ENCODE measurements at regions of chr2 and their contacts with region 1.

Region 1: GRCh38 chr2:213251618-213252017 is 32.6 kb upstream of the SPAG16 start:
- DNase-seq: peak in 1 of 2 experiments; percentile 58
- H3K4me3 ChIP-seq: no peak overlapping the region
- H3K4me3 Mint-ChIP-seq: no peak overlapping the region
- H3K27ac Mint-ChIP-seq: peak overlapping the region; percentile 76
- H3K4me1 ChIP-seq: peaks cover 6% of the 10 kb centered on the region; the same call in 1 of the 2 replicates
- H3K4me1 Mint-ChIP-seq: peaks cover 6% of the 10 kb centered on the region
- H3K27me3 ChIP-seq: no peaks in the 10 kb centered on the region
- H3K27me3 Mint-ChIP-seq: no peaks in the 10 kb centered on the region
- CTCF ChIP-seq: peak; percentile 57 to 61

Region 2: DNA sequence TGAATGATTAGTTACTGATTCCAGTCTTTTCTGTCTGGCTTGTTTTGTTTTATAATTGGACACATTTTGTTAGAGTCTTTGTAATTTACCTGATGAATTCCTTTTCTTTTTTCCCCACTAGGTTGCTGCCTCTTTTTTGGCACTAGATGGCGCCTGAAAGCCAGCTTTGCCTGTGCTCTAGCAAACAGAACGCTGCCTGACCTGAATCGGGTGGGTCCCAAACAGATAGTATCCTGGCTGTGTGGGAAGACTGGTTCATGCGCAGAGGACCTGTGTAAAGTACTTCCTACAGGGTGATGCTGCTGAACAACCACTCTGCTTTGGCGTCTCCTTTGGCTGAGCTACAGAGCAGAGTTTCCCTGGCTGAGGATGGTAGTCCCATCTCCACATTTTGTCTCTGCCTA is 388.4 kb before region 1 on chr2:
- CTCF ChIA-PET with region 1: no interaction called
- POLR2A ChIA-PET with region 1: no interaction called
- intact Hi-C with region 1: loop called (anchors 1 kb)
- DNase-seq: peak; percentile 64 to 70
- H3K4me3 ChIP-seq: no peak overlapping the region
- H3K4me3 Mint-ChIP-seq: no peak overlapping the region
- H3K27ac Mint-ChIP-seq: no peak overlapping the region
- H3K4me1 ChIP-seq: no peaks in the 10 kb centered on the region
- H3K4me1 Mint-ChIP-seq: no peaks in the 10 kb centered on the region
- H3K27me3 ChIP-seq: no peaks in the 10 kb centered on the region
- H3K27me3 Mint-ChIP-seq: no peaks in the 10 kb centered on the region
- CTCF ChIP-seq: peak; percentile 57 to 59

Region 3: GRCh38 chr2:213151437-213152064 is 100.1 kb before region 1 on chr2 and contains the start of gene IKZF2:
- CTCF ChIA-PET with region 1: no interaction called
- POLR2A ChIA-PET with region 1: no interaction called
- intact Hi-C with region 1: no loop called
- DNase-seq: peak; percentile 86 to 88
- H3K4me3 ChIP-seq: peak within 1 kb of the TSS; percentile 70
- H3K4me3 Mint-ChIP-seq: peak within 1 kb of the TSS; percentile 97
- H3K27ac Mint-ChIP-seq: peak within 1 kb of the TSS; percentile 61
- H3K4me1 ChIP-seq: 0 out of 2 replicates have a peak, but pooled peaks cover 3% of the 10 kb centered on the region
- H3K4me1 Mint-ChIP-seq: peaks cover 19% of the 10 kb centered on the region
- H3K27me3 ChIP-seq: no peaks in the 10 kb centered on the region
- H3K27me3 Mint-ChIP-seq: no peaks in the 10 kb centered on the region
- CTCF ChIP-seq: no peak
- total RNA-seq, gene IKZF2: 13.3 and 14.2 TPM in 2 replicates

Region 4: DNA sequence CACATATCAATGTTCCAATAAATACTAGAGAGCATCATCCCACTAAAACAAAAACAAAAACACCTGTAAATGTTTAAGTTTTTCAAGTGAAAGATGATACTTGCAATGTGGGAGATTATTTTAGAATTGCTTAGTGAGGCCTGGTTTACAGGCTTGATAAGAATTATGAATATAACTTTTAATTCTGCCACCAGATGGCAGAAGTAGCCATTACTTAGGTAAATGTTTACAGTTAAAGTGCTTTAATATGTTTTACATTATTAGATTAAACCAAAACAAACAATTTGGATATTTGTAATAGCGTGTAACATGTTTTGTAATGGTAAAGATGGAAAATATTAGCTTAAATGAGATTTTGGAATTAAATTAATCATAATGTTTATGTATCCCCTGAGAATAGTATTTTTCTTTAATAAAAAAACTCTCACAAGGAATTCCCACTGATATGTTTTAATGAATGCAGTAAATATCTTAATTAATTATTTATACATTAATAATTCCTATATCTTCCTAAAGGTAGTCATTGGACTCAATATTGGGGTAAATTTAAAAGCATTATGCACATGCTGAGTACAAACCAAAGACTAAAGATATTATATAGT is 554.6 kb after region 1 on chr2:
- CTCF ChIA-PET with region 1: no interaction called
- POLR2A ChIA-PET with region 1: no interaction called
- intact Hi-C with region 1: loop called (anchors 5 kb)
- DNase-seq: no peak
- H3K4me3 ChIP-seq: no peak overlapping the region
- H3K4me3 Mint-ChIP-seq: no peak overlapping the region
- H3K27ac Mint-ChIP-seq: no peak overlapping the region
- H3K4me1 ChIP-seq: no peaks in the 10 kb centered on the region
- H3K4me1 Mint-ChIP-seq: no peaks in the 10 kb centered on the region
- H3K27me3 ChIP-seq: no peaks in the 10 kb centered on the region
- H3K27me3 Mint-ChIP-seq: no peaks in the 10 kb centered on the region
- CTCF ChIP-seq: peak; percentile 13 to 36

Region 5: GRCh38 chr2:213934560-213934959 is 682.9 kb after region 1 on chr2:
- CTCF ChIA-PET with region 1: no interaction called
- POLR2A ChIA-PET with region 1: no interaction called
- intact Hi-C with region 1: loop called (anchors 1 kb)
- DNase-seq: peak in 1 of 2 experiments; percentile 14
- H3K4me3 ChIP-seq: no peak overlapping the region
- H3K4me3 Mint-ChIP-seq: no peak overlapping the region
- H3K27ac Mint-ChIP-seq: no peak overlapping the region
- H3K4me1 ChIP-seq: no peaks in the 10 kb centered on the region
- H3K4me1 Mint-ChIP-seq: peaks cover under 1% of the 10 kb centered on the region
- H3K27me3 ChIP-seq: no peaks in the 10 kb centered on the region
- H3K27me3 Mint-ChIP-seq: no peaks in the 10 kb centered on the region
- CTCF ChIP-seq: peak; percentile 36 to 43

Region 6: DNA sequence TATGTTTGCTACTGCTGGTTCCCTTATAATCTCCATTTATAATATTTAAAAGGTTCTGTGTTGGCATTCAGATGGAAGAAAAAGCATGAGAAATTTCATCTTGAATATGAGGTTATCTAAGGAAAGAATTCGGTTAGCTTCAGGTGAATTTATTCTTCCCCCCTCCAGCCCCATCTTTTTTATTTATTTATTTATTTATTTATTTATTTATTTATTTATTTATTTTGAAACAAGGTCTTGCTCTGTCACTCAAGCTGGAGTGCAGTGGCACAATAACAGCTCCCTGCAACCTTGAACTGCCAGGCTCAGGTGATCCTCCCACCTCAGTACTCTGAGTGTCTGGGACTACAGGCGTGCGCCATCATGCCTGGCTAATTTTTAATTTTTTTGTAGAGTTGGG is 1063.7 kb after region 1 on chr2:
- CTCF ChIA-PET with region 1: no interaction called
- POLR2A ChIA-PET with region 1: no interaction called
- intact Hi-C with region 1: loop called (anchors 5 kb)
- DNase-seq: no peak
- H3K4me3 ChIP-seq: no peak overlapping the region
- H3K4me3 Mint-ChIP-seq: no peak overlapping the region
- H3K27ac Mint-ChIP-seq: no peak overlapping the region
- H3K4me1 ChIP-seq: no peaks in the 10 kb centered on the region
- H3K4me1 Mint-ChIP-seq: no peaks in the 10 kb centered on the region
- H3K27me3 ChIP-seq: no peaks in the 10 kb centered on the region
- H3K27me3 Mint-ChIP-seq: no peaks in the 10 kb centered on the region
- CTCF ChIP-seq: no peak

Region 7: GRCh38 chr2:214593727-214594126 is 1342.1 kb after region 1 on chr2:
- CTCF ChIA-PET with region 1: no interaction called
- POLR2A ChIA-PET with region 1: no interaction called
- intact Hi-C with region 1: loop called (anchors 1 kb)
- DNase-seq: peak; percentile 27 to 53
- H3K4me3 ChIP-seq: no peak overlapping the region
- H3K4me3 Mint-ChIP-seq: no peak overlapping the region
- H3K27ac Mint-ChIP-seq: no peak overlapping the region
- H3K4me1 ChIP-seq: no peaks in the 10 kb centered on the region
- H3K4me1 Mint-ChIP-seq: no peaks in the 10 kb centered on the region
- H3K27me3 ChIP-seq: no peaks in the 10 kb centered on the region
- H3K27me3 Mint-ChIP-seq: no peaks in the 10 kb centered on the region
- CTCF ChIP-seq: no peak

Region 8: GRCh38 chr2:215002500-215002899 is 1750.9 kb after region 1 on chr2:
- CTCF ChIA-PET with region 1: no interaction called
- POLR2A ChIA-PET with region 1: no interaction called
- intact Hi-C with region 1: loop called (anchors 1 kb)
- DNase-seq: peak; percentile 36 to 48
- H3K4me3 ChIP-seq: no peak overlapping the region
- H3K4me3 Mint-ChIP-seq: no peak overlapping the region
- H3K27ac Mint-ChIP-seq: no peak overlapping the region
- H3K4me1 ChIP-seq: no peaks in the 10 kb centered on the region
- H3K4me1 Mint-ChIP-seq: no peaks in the 10 kb centered on the region
- H3K27me3 ChIP-seq: no peaks in the 10 kb centered on the region
- H3K27me3 Mint-ChIP-seq: peaks cover 5% of the 10 kb centered on the region
- CTCF ChIP-seq: peak; percentile 63 to 65